ENCODE measurements at regions of chr4 and their contacts with region 1.

Region 1: DNA sequence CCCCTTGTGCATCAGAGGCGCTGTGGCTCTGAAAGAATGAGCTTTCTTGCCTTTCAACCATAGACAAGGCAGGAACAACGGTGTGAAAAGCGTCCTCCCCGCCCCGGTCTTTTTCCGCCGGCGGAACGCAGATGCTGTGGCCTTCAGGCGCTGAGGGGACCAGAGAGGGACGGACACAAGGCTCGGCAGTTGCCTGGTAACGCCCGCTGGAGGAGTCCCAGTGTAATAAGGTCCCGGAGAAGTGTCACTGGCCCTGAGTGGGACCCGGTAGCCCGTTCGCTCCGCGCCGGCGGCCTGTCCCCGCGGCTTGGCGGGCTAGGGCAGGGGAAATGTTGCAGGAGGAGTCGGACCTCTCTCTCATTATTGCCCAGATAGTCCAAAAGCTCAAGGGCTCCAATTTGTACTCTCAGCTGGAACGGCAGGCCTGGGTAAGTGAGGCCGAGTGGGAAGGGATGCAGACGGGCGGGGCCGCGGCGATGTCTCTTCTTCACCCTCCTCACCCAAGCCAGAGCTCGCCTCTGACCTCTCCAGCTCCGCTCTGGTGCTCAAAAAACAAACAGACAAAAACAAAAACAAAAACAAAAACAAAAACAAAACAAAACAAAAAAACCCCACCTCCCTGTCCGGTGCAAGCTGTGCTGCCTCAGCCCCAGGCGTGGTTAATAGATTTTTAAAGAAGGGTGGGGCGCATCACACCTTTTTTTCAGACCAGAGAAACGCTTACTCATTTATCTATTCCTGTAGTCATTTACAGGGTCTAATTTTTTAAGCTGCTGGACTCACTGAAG is at the start of gene TBC1D19:
- DNase-seq: peak; percentile 81 to 95 (median 86)
- ATAC-seq: peak; percentile 86
- H3K4me3 ChIP-seq: peak within 1 kb of the TSS; percentile 67 to 70
- H3K4me3 Mint-ChIP-seq: peak within 1 kb of the TSS; percentile 94
- H3K27ac ChIP-seq: peak within 1 kb of the TSS; percentile 87 to 97
- H3K27ac Mint-ChIP-seq: peak within 1 kb of the TSS; percentile 91
- H3K4me1 ChIP-seq: peaks cover 13% of the 10 kb centered on the region
- H3K4me1 Mint-ChIP-seq: peaks cover 25% of the 10 kb centered on the region
- H3K27me3 ChIP-seq: no peaks in the 10 kb centered on the region
- H3K27me3 Mint-ChIP-seq: peaks cover 1% of the 10 kb centered on the region
- CTCF ChIP-seq: no peak
- total RNA-seq, gene TBC1D19: 3.4 to 4.4 TPM

Region 2: GRCh38 chr4:24584175-24584850 is 1999.7 kb before region 1 on chr4 and contains the start of gene DHX15:
- CTCF ChIA-PET with region 1: no interaction called
- POLR2A ChIA-PET with region 1: no interaction called
- intact Hi-C with region 1: loop called in 1 of 2 experiments (anchors 5 kb)
- DNase-seq: peak; percentile 81 to 98 (median 91)
- ATAC-seq: peak; percentile 94
- H3K4me3 ChIP-seq: peak within 1 kb of the TSS; percentile 81 to 97
- H3K4me3 Mint-ChIP-seq: peak within 1 kb of the TSS; percentile 98
- H3K27ac ChIP-seq: peak within 1 kb of the TSS; percentile 90 to 98
- H3K27ac Mint-ChIP-seq: peak within 1 kb of the TSS; percentile 98
- H3K4me1 ChIP-seq: peaks cover 18% of the 10 kb centered on the region
- H3K4me1 Mint-ChIP-seq: peaks cover 43% of the 10 kb centered on the region
- H3K27me3 ChIP-seq: no peaks in the 10 kb centered on the region
- H3K27me3 Mint-ChIP-seq: no peaks in the 10 kb centered on the region
- CTCF ChIP-seq: no peak
- total RNA-seq, gene DHX15: 211 to 221 TPM

Region 3: DNA sequence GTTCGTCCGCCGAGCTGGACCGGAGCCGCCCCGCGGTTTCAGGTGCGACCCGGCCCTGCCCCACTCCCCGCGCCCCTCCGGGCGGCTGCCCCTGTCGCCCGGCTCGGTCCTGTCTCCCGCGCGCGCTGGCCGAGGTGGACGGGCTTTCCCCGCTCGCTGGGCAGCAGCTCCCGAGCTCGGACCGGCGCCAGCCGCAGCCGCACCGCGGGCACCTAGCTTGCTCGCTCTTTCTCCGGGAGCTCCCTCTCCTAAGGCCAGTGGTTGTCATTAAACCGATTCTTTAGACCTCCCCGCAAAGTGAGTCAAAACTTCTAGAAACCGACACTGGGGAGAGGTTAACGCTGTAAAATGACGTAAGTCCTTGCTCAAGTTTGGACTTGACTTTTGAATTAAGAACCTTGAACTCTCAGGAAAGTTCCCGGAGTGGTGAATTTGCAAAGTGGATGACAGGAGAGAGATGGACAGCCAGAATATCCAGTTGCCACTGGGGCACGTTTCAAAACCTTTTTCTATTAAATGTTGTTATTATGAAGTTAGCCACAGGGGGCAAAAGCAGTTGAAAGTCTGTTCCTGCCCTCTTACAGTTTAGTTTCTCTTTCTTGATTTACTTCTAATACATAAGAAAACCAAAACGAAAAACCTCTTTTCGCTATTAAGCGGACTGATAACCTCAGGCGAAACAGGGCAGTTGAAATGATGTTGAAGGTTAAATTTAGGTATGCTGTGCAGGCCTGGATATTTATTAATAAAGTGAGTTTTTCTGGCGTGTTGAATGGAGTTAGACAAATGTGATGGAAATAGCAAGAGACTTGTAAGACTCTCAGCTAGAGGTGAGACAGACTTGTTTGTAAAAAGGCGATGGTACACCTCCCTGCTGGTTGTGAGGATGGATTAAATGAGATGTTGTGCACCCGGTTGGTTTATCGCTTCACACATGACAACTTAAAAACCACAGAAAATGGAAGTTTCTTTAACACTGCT is 1349.4 kb before region 1 on chr4:
- CTCF ChIA-PET with region 1: no interaction called
- POLR2A ChIA-PET with region 1: no interaction called
- intact Hi-C with region 1: loop called (anchors 10 kb)
- DNase-seq: peak in 7 of 9 experiments; percentile 4 to 87 (median 32)
- ATAC-seq: peak; percentile 56
- H3K4me3 ChIP-seq: peak overlapping the region; percentile 77 to 81
- H3K4me3 Mint-ChIP-seq: peak overlapping the region; percentile 84
- H3K27ac ChIP-seq: peak overlapping the region; percentile 67 to 84
- H3K27ac Mint-ChIP-seq: peak overlapping the region; percentile 89
- H3K4me1 ChIP-seq: peaks cover 11% of the 10 kb centered on the region
- H3K4me1 Mint-ChIP-seq: peaks cover 35% of the 10 kb centered on the region
- H3K27me3 ChIP-seq: no peaks in the 10 kb centered on the region
- H3K27me3 Mint-ChIP-seq: no peaks in the 10 kb centered on the region
- CTCF ChIP-seq: peak; percentile 66

Region 4: DNA sequence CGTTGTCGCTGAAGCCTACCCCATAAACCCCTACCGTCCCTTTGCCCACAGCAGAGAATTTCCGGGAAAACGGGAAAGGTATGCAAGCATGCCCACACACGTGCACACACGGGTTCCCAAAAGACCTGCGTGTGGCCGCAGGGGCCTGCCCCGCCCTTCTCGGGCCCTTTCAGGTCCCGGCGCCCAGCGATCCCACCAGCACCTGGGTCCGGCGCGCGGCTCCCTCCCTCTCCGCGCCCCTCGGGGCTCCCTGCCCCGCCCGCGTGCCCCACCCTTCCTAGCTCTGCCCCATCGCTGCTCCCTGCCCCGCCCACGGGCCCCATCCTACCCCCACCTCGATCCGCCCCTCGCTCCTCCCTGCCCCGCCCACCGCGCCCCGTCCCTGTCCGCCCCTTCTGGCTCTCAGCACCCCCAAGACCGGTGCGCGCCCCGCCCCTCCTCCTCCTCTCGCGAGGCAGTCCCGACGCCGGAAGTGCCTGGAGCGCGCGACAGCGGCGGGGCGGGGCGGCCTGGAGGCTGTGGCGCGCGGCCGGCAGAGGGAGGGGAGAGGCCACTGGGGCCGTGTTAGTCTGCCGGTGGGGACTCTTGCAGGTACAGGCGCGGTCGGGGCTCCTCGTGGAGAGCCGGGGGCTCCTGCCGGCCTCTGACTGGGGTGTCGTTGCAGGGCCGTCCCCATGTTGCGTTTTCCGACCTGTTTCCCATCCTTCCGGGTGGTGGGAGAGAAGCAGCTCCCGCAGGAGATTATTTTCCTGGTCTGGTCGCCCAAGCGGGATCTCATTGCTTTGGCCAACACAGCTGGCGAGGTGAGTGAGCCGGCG is 1207.1 kb before region 1 on chr4 and contains the start of gene ANAPC4:
- CTCF ChIA-PET with region 1: no interaction called
- POLR2A ChIA-PET with region 1: no interaction called
- intact Hi-C with region 1: loop called (anchors 5 kb)
- DNase-seq: peak; percentile 95 to 100 (median 98)
- ATAC-seq: peak; percentile 95
- H3K4me3 ChIP-seq: peak within 1 kb of the TSS; percentile 89 to 96
- H3K4me3 Mint-ChIP-seq: no peak within 1 kb of the TSS
- H3K27ac ChIP-seq: peak within 1 kb of the TSS; percentile 60 to 64
- H3K27ac Mint-ChIP-seq: peak within 1 kb of the TSS; percentile 90
- H3K4me1 ChIP-seq: peaks cover 21% of the 10 kb centered on the region
- H3K4me1 Mint-ChIP-seq: peaks cover 16% of the 10 kb centered on the region
- H3K27me3 ChIP-seq: no peaks in the 10 kb centered on the region
- H3K27me3 Mint-ChIP-seq: no peaks in the 10 kb centered on the region
- CTCF ChIP-seq: no peak
- total RNA-seq, gene ANAPC4: 28.0 to 30.5 TPM

Region 5: DNA sequence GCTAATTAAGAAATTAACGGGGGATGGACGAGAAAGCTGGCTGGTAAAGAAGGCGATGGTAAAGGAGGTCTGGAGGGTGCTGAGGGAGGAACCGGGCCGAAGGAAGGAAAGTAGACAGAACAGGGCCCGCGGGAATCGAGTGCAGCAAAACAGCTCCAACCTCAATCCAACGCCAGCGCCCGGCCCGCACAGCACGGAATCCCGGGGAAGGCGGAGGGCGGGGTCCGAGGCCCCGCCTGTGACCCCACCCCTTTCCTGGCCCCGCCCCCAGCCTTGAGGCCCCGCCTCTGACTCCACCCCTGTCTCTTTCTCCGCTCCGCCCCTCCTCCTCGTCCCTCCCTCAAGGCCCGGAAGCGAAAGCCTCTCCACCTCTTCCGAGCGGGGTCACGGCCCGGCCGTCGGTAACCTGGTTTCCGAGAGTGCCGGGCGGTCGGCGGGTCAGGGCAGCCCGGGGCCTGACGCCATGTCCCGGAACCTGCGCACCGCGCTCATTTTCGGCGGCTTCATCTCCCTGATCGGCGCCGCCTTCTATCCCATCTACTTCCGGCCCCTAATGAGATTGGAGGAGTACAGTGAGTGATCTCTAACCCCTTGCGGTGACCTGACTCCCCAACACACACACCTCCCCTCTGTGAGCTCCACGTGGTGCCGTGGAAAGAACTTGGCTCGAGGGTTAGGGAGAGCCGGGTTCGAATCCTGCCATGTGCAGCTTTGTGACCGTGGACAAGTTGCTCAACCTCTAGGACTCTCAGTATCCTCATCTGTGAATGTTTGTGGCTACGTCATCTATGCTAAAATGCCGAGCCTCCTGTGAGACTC is 670.0 kb before region 1 on chr4 and contains the start of gene SMIM20:
- CTCF ChIA-PET with region 1: no interaction called
- POLR2A ChIA-PET with region 1: interaction called, 5 read pairs
- intact Hi-C with region 1: loop called (anchors 2 to 5 kb)
- DNase-seq: peak; percentile 81 to 95 (median 87)
- ATAC-seq: peak; percentile 94
- H3K4me3 ChIP-seq: peak within 1 kb of the TSS; percentile 72 to 78
- H3K4me3 Mint-ChIP-seq: peak within 1 kb of the TSS; percentile 97
- H3K27ac ChIP-seq: peak within 1 kb of the TSS; percentile 81 to 95
- H3K27ac Mint-ChIP-seq: peak within 1 kb of the TSS; percentile 98
- H3K4me1 ChIP-seq: peaks cover 18% of the 10 kb centered on the region
- H3K4me1 Mint-ChIP-seq: peaks cover 24% of the 10 kb centered on the region
- H3K27me3 ChIP-seq: no peaks in the 10 kb centered on the region
- H3K27me3 Mint-ChIP-seq: no peaks in the 10 kb centered on the region
- CTCF ChIP-seq: no peak
- total RNA-seq, gene SMIM20: 7.5 to 9.8 TPM

Region 6: DNA sequence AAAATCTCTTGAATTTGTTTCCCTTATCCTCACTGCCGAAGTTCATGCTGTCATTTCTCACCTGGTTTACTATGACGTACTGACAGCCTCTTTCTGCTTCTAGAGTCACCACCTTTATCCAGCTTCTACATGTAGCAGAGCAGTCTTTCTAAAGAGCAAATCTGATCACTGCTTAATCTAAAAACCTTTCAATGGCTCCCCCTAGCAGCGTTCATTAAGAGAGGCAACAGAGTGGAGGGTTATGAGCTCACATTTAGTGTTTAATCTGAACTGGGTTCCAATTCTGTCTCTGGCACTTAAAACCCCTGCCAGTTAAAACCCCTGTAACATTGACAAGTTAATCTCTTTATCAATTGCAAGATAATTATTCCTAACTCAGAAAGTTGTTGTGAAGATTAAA is 258.9 kb before region 1 on chr4:
- CTCF ChIA-PET with region 1: no interaction called
- POLR2A ChIA-PET with region 1: interaction called, 6 read pairs
- intact Hi-C with region 1: loop called (anchors 2 to 5 kb)
- DNase-seq: peak in 5 of 9 experiments; percentile 7 to 71 (median 22)
- ATAC-seq: peak; percentile 35
- H3K4me3 ChIP-seq: no peak overlapping the region
- H3K4me3 Mint-ChIP-seq: no peak overlapping the region
- H3K27ac ChIP-seq: no peak overlapping the region
- H3K27ac Mint-ChIP-seq: no peak overlapping the region
- H3K4me1 ChIP-seq: peaks cover 14% of the 10 kb centered on the region
- H3K4me1 Mint-ChIP-seq: peaks cover 52% of the 10 kb centered on the region
- H3K27me3 ChIP-seq: no peaks in the 10 kb centered on the region
- H3K27me3 Mint-ChIP-seq: no peaks in the 10 kb centered on the region
- CTCF ChIP-seq: peak; percentile 53

Region 7: DNA sequence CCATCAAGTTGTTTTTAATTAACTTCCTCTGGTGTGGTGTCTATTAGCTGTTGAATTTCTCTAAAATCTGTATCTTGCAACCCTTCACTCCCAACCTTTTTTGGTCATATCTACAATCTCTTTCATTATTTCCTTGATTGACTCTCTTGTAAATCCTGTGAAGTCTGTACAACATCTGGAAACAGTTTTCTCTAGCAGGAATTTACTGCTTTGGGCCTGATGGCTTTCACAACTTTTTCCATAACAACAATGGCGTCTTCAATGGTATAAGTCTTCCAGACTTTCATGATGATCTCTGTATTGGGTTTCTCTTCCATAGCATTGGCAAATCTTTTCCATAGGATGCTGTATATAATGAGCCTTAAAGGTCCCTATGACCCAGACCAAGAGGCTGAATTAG is 48.9 kb after region 1 on chr4:
- CTCF ChIA-PET with region 1: no interaction called
- POLR2A ChIA-PET with region 1: no interaction called
- intact Hi-C with region 1: no loop called
- DNase-seq: no peak
- ATAC-seq: no peak
- H3K4me3 ChIP-seq: no peak overlapping the region
- H3K4me3 Mint-ChIP-seq: no peak overlapping the region
- H3K27ac ChIP-seq: no peak overlapping the region
- H3K27ac Mint-ChIP-seq: no peak overlapping the region
- H3K4me1 ChIP-seq: no peaks in the 10 kb centered on the region
- H3K4me1 Mint-ChIP-seq: no peaks in the 10 kb centered on the region
- H3K27me3 ChIP-seq: no peaks in the 10 kb centered on the region
- H3K27me3 Mint-ChIP-seq: no peaks in the 10 kb centered on the region
- CTCF ChIP-seq: no peak

Region 8: DNA sequence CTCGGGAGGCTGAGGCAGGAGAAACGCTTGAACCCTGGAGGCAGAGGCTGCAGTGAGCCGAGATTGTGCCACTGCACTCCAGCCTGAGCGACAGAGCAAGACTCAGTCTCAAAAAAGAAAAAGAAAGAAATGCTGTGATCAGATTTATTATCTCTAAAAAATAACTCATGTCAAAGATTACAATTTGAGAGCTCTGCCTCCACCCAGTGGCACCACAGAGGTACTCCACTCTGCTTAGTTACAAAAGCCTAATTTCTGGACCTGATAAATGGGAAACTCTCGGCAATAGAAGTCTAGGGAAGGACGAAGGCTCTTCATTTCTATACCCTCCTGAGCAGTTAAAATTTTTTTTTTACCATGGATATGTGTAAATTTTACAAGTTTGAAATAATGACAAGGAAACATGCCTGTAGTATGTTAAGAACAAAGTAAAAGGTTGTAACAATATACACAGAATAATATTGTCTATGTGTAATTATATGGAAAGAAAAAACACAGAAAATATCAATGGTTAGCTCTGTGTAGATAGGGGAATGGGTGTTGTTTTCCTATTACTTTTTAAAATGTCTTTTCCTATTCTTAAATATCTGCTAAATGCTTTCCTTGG is 426.4 kb after region 1 on chr4:
- CTCF ChIA-PET with region 1: no interaction called
- POLR2A ChIA-PET with region 1: no interaction called
- intact Hi-C with region 1: loop called in 1 of 2 experiments (anchors 1 kb)
- DNase-seq: peak; percentile 23 to 76 (median 64)
- ATAC-seq: peak; percentile 90
- H3K4me3 ChIP-seq: no peak overlapping the region
- H3K4me3 Mint-ChIP-seq: no peak overlapping the region
- H3K27ac ChIP-seq: no peak overlapping the region
- H3K27ac Mint-ChIP-seq: peak overlapping the region; percentile 72
- H3K4me1 ChIP-seq: no peaks in the 10 kb centered on the region
- H3K4me1 Mint-ChIP-seq: peaks cover 13% of the 10 kb centered on the region
- H3K27me3 ChIP-seq: no peaks in the 10 kb centered on the region
- H3K27me3 Mint-ChIP-seq: no peaks in the 10 kb centered on the region
- CTCF ChIP-seq: peak; percentile 98

Measured in CD8-positive, alpha-beta T cell (primary cell).